Prostate gland (tissue), 2 donors: ENCODE measurements at regions of chr1 and their contacts with region 1.

Region 1: GRCh38 chr1:179809506-179810366 is 66.6 kb downstream of the FAM163A start:
- DNase-seq: peak; percentile 48
- H3K4me3 ChIP-seq: no peak overlapping the region
- H3K27ac ChIP-seq: no peak overlapping the region
- H3K4me1 ChIP-seq: peaks cover 4% of the 10 kb centered on the region
- H3K27me3 ChIP-seq: no peaks in the 10 kb centered on the region
- CTCF ChIP-seq: peak; percentile 79 to 89 (median 82)
- POLR2A ChIP-seq: no peak

Region 2: DNA sequence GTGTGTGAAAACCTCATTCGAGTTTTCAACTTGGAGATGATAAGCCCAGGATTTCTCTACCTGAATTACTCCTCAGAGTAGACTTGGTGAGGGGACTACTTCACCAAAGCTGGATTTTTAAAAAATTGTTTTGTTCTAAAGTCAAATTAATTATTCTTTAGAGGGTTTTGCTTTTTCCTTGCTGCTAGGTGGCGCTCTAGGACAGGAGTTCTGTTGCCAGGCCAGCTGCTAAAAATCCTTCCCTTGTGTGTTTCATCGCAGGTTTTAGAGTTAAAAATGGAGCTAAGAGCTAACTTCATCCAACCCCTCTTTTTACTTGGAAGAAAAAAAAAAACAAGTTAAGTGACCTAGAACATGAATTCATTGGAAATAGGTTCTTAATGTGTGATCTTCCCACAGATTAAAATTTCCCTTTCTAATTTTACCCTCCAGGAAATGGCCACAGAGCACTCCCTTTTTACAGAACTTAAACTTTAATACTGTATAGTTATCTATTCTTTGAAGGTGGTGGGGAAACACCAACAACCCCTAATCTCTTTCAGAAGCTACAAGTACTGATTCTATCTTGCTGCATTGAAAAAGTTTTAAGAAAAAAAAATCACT is 103.3 kb before region 1 on chr1:
- intact Hi-C with region 1: loop called (anchors 2 kb)
- DNase-seq: peak; percentile 24
- H3K4me3 ChIP-seq: no peak overlapping the region
- H3K27ac ChIP-seq: no peak overlapping the region
- H3K4me1 ChIP-seq: no peaks in the 10 kb centered on the region
- H3K27me3 ChIP-seq: no peaks in the 10 kb centered on the region
- CTCF ChIP-seq: peak in 3 of 4 experiments; percentile 56 to 68 (median 63)
- POLR2A ChIP-seq: no peak